ENCODE measurements at regions of chr9 and their contacts with region 1.

Region 1: GRCh38 chr9:111037381-111038305 is 627 bp downstream of the LPAR1 start:
- DNase-seq: peak in 1 of 2 experiments; percentile 57
- H3K4me3 ChIP-seq: peak overlapping the region; percentile 74
- H3K27ac ChIP-seq: peak overlapping the region; percentile 3; the same call in 1 of the 2 replicates
- H3K4me1 ChIP-seq: peaks cover 16% of the 10 kb centered on the region
- H3K27me3 ChIP-seq: no peaks in the 10 kb centered on the region
- CTCF ChIP-seq: no peak; the same call in 1 of the 2 replicates

Region 2: DNA sequence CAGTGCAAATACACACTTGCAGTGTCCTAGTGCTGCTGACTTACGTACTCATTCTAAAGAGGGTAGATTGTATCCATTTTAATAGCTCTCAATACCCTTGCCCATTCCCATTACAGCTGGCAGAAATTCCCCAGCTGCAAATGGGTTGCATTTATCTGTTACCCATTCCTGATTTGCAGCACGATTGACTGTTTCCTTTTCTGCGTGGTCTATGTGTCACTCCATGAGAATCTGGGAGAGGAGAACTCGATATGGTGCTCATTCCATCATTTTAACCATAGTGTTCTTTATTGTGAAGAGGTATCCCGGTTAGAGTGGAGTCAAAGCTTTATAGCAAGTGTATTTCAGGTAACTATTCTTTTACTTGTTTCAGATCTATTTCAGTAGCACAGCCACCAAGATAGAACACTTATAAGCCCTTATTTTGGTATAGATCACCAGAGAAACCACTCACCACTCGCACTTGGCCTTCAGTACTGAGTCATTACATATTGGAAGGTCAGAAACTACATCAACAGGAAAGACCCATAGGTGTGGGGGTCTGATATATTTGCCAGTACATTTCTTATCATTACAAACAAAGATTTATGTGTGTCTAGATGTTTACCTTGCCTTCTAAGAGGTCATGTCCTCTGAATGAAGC is 229.6 kb before region 1 on chr9:
- CTCF ChIA-PET with region 1: no interaction called
- POLR2A ChIA-PET with region 1: no interaction called
- intact Hi-C with region 1: no loop called
- DNase-seq: no peak
- H3K4me3 ChIP-seq: no peak overlapping the region
- H3K27ac ChIP-seq: 0 out of 2 replicates have a peak overlapping the region, but pooled peaks have one; percentile 1
- H3K4me1 ChIP-seq: 0 out of 2 replicates have a peak, but pooled peaks cover 9% of the 10 kb centered on the region
- H3K27me3 ChIP-seq: no peaks in the 10 kb centered on the region
- CTCF ChIP-seq: no peak

Region 3: DNA sequence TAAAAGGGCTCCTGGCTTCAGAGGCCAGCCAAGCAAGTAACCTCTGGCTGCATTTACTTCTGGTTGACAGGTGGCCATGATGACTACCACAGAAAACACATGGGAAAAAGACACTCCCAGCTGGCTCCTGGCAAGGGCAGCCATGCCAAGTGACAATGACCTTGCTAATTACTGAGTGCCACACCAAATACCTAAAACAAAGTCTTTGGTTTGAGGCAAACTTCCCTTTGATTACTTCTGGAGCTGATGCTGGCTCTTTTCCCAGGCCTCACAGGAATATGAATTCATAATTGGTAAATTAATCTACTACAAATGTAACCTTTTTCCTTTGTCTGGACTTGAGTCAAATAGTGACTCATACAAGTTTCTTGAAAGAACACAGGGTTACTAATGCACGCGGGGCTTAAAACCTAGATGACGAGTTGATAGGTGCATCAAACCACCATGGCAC is 60.4 kb before region 1 on chr9:
- CTCF ChIA-PET with region 1: no interaction called
- POLR2A ChIA-PET with region 1: no interaction called
- intact Hi-C with region 1: loop called (anchors 5 kb)
- DNase-seq: peak; percentile 67 to 84
- H3K4me3 ChIP-seq: no peak overlapping the region
- H3K27ac ChIP-seq: peak overlapping the region; percentile 58
- H3K4me1 ChIP-seq: peaks cover 11% of the 10 kb centered on the region
- H3K27me3 ChIP-seq: no peaks in the 10 kb centered on the region
- CTCF ChIP-seq: no peak

Measured in PC-9 (cell line).